K562 (cell line): ENCODE measurements at regions of chr14 and their contacts with region 1.

Region 1: DNA sequence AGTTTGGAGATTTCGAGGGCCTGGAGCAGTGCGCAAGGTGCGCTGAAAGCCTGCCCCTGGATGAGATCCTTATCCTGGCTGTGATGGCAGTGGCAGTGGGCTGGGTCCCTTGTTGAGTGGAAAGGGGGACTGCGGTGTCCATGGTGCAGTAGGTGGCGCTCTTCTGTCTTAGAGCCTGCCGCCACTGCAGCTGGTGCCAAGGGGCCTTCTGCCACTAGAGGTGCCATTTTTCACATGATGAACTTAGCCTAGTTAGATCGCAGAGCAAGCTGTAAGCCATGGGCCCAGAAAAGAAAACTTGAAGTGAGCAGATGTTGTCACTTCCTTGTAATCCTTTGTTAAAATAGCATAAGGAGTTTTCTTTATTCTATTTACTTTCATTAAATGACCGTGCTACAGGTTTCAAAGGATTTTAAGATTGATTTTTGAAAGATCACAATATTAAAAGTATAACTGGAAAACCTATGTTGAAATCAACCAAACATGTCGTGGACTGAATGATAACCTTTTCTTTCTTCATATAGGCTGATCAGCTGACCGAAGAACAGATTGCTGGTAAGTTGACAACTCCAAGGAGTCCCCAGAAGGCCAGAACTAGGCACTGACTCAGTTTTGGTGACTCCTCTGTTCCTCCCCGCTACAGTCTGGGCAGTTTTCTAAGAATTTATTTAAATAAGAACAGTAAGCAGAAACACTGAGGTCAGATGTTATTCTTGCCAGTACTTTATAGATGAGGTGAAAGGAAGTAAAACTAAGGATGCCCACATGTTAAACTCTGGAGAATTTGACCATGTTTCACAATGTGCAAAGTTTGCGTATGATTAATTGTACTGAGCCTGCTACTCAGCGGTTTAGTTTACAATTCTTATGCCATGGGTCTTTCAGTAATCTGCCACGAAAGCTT is 3.0 kb downstream of the CALM1 start:
- DNase-seq: peak; percentile 64 to 86 (median 78)
- ATAC-seq: peak; percentile 72
- H3K4me3 ChIP-seq: no peak overlapping the region
- H3K27ac ChIP-seq: no peak overlapping the region
- H3K4me1 ChIP-seq: peaks cover 6 to 14% of the 10 kb centered on the region in 2 experiments; a peak in 4 of 5 replicates
- H3K27me3 ChIP-seq: no peaks in the 10 kb centered on the region
- CTCF ChIP-seq: peak; percentile 97 to 100 (median 99)
- EP300 ChIP-seq: no peak
- POLR2A ChIP-seq: no peak
- RAD21 ChIP-seq: peak; percentile 75 to 76

Region 2: DNA sequence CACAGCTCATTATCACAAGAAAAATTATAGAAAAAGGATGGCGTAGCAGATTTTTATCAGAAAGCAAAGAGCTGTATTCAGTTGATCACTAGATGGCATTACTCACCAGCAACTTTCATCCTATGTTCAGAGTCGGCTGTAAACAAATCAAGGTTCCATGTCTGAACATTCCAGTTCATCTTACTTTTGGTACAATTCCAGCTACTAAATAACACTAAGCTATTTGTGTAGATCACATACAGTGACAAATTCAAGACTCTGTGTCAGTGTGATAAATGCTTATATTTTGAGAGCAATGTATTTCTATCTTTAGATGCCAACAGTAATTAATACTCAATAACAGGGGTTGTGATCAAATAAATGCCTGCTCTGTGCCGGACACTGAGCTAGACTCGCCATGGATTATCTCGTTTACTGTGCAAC is 98.1 kb before region 1 on chr14:
- CTCF ChIA-PET with region 1: interaction called, 4 read pairs
- POLR2A ChIA-PET with region 1: interaction called, 3 read pairs
- in situ Hi-C with region 1: no loop called
- intact Hi-C with region 1: loop called (anchors 5 kb)
- DNase-seq: peak in 1 of 4 experiments; percentile 6
- ATAC-seq: peak; percentile 53; the same call in 2 of the 3 replicates
- H3K4me3 ChIP-seq: no peak overlapping the region
- H3K27ac ChIP-seq: no peak overlapping the region
- H3K4me1 ChIP-seq: peaks cover 0 to 7% of the 10 kb centered on the region in 2 experiments; a peak in 2 of 5 replicates
- H3K27me3 ChIP-seq: no peaks in the 10 kb centered on the region
- CTCF ChIP-seq: peak in 2 of 3 experiments; percentile 25 to 51; a peak in 2 of 6 replicates
- EP300 ChIP-seq: no peak
- POLR2A ChIP-seq: no peak
- RAD21 ChIP-seq: peak; percentile 51 to 64

Region 3: GRCh38 chr14:90331497-90332435 is 68.0 kb before region 1 on chr14 and contains the start of gene NRDE2:
- CTCF ChIA-PET with region 1: no interaction called
- POLR2A ChIA-PET with region 1: no interaction called
- in situ Hi-C with region 1: no loop called
- intact Hi-C with region 1: loop called (anchors 2 kb)
- DNase-seq: peak; percentile 92 to 97 (median 93)
- ATAC-seq: peak; percentile 96
- H3K4me3 ChIP-seq: peak within 1 kb of the TSS; percentile 47
- H3K27ac ChIP-seq: peak within 1 kb of the TSS; percentile 67
- H3K4me1 ChIP-seq: peaks cover 0 to 11% of the 10 kb centered on the region in 2 experiments; a peak in 3 of 5 replicates
- H3K27me3 ChIP-seq: no peaks in the 10 kb centered on the region
- CTCF ChIP-seq: no peak
- EP300 ChIP-seq: no peak
- POLR2A ChIP-seq: peak; percentile 79
- RAD21 ChIP-seq: no peak
- polyA plus RNA-seq, gene NRDE2: 3.3 to 5.7 TPM

Region 4: GRCh38 chr14:90383075-90383730 is 16.6 kb before region 1 on chr14:
- CTCF ChIA-PET with region 1: no interaction called
- POLR2A ChIA-PET with region 1: interaction called, 29 read pairs
- in situ Hi-C with region 1: no loop called
- intact Hi-C with region 1: no loop called
- DNase-seq: peak; percentile 96 to 98 (median 96)
- ATAC-seq: peak; percentile 93
- H3K4me3 ChIP-seq: peak overlapping the region; percentile 59
- H3K27ac ChIP-seq: peak overlapping the region; percentile 97
- H3K4me1 ChIP-seq: peaks cover 27 to 31% of the 10 kb centered on the region in 2 experiments
- H3K27me3 ChIP-seq: no peaks in the 10 kb centered on the region
- CTCF ChIP-seq: peak in 2 of 3 experiments; percentile 5 to 8; a peak in 1 of 6 replicates
- EP300 ChIP-seq: peak; percentile 12; the same call in 1 of the 2 replicates
- POLR2A ChIP-seq: peak; percentile 89
- RAD21 ChIP-seq: no peak

Region 5: DNA sequence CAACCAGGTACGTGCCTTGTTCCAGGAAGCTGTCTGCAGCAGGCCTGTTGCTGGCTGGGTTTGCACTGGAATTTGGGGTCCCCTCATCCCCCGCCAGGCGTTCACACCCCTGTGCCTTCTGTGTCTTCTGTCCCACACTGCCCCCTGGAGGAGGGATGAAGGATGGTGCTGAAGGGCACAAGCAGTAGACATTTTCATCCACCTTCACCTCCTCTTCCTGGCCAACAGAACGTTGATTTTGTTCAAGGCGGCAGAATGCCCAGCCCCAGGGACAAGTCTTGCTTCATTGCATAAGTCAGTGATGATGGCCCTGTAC is 119.1 kb after region 1 on chr14:
- CTCF ChIA-PET with region 1: interaction called, 5 read pairs
- POLR2A ChIA-PET with region 1: no interaction called
- in situ Hi-C with region 1: loop called (anchors 10 kb)
- intact Hi-C with region 1: loop called (anchors 2 kb)
- DNase-seq: peak; percentile 65 to 66 (median 65)
- ATAC-seq: peak; percentile 86
- H3K4me3 ChIP-seq: no peak overlapping the region
- H3K27ac ChIP-seq: no peak overlapping the region
- H3K4me1 ChIP-seq: peaks cover 7 to 26% of the 10 kb centered on the region in 2 experiments
- H3K27me3 ChIP-seq: no peaks in the 10 kb centered on the region
- CTCF ChIP-seq: peak; percentile 62 to 76 (median 62)
- EP300 ChIP-seq: no peak
- POLR2A ChIP-seq: no peak
- RAD21 ChIP-seq: peak; percentile 47 to 65; a peak in 2 of 4 replicates

Region 6: GRCh38 chr14:90536092-90536491 is 136.3 kb after region 1 on chr14:
- CTCF ChIA-PET with region 1: no interaction called
- POLR2A ChIA-PET with region 1: no interaction called
- in situ Hi-C with region 1: no loop called
- intact Hi-C with region 1: no loop called
- DNase-seq: no peak
- ATAC-seq: peak; percentile 30
- H3K4me3 ChIP-seq: no peak overlapping the region
- H3K27ac ChIP-seq: no peak overlapping the region
- H3K4me1 ChIP-seq: peaks cover 12 to 42% of the 10 kb centered on the region in 2 experiments; a peak in 4 of 5 replicates
- H3K27me3 ChIP-seq: no peaks in the 10 kb centered on the region
- CTCF ChIP-seq: no peak
- EP300 ChIP-seq: no peak
- POLR2A ChIP-seq: no peak
- RAD21 ChIP-seq: no peak

Region 7: DNA sequence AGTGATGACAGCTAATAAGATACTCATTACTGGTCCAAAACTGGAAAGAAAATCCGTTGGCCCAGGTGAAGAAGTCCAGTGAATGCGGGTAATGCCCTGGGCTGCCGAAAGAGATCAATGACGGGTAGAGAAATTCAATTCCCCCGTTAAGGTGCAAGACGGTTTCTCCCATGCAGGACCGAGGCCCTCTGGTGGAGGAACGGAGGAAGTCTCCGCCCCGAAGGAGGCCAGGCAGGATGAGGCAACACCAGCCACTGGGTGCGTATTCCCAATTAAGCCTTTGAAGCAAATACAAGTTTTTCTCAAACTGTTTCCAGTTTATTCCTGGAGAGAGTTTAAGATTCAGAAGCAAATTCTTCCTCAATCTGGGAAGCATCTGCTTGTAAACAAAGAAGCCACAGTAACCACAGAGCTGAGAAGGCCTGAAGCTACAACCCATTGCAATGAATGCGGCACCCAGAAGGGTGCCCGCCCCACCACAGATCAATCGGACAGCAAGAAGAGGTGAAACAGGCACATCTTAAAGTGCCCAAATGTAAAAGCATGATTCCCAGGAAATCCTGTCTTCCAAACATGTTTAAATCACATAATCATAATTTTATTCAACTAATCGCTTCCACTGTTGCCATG is 297.9 kb after region 1 on chr14:
- CTCF ChIA-PET with region 1: interaction called, 15 read pairs
- POLR2A ChIA-PET with region 1: interaction called, 7 read pairs
- in situ Hi-C with region 1: no loop called
- intact Hi-C with region 1: loop called (anchors 1 kb)
- DNase-seq: peak; percentile 71 to 75 (median 72)
- ATAC-seq: peak; percentile 98
- H3K4me3 ChIP-seq: no peak overlapping the region
- H3K27ac ChIP-seq: no peak overlapping the region
- H3K4me1 ChIP-seq: peaks cover 0 to 2% of the 10 kb centered on the region in 2 experiments; a peak in 2 of 5 replicates
- H3K27me3 ChIP-seq: no peaks in the 10 kb centered on the region
- CTCF ChIP-seq: peak; percentile 72 to 81 (median 78)
- EP300 ChIP-seq: no peak
- POLR2A ChIP-seq: no peak
- RAD21 ChIP-seq: peak; percentile 68 to 77